K562 (cell line): ENCODE measurements at regions of chr9 and their contacts with region 1.

Region 1: GRCh38 chr9:12538842-12539579 is 154.2 kb upstream of the TYRP1 start:
- DNase-seq: no peak
- ATAC-seq: no peak
- H3K4me3 ChIP-seq: no peak overlapping the region
- H3K27ac ChIP-seq: no peak overlapping the region
- H3K4me1 ChIP-seq: no peaks in the 10 kb centered on the region
- H3K27me3 ChIP-seq: no peaks in the 10 kb centered on the region
- CTCF ChIP-seq: no peak
- EP300 ChIP-seq: no peak
- POLR2A ChIP-seq: no peak
- RAD21 ChIP-seq: no peak

Region 2: DNA sequence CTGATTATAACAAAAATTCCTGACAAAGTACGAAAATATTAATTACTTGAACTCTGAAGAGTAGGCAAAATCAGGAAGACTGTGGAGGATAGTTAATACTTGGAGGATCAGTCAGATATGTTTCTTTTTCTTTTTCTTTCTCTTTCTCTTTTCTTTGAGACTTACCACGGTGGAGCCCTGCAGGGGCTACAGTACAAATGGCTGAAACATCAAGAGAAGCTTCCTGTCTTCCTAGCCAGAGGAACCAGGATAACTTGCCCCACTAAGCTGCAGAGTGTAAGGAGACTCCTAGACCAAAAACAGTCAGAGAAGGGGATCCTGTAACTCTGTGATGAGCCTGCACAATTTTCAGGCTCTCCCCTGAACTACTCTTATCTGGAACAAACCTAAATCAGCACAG is 170.4 kb before region 1 on chr9:
- CTCF ChIA-PET with region 1: no interaction called
- POLR2A ChIA-PET with region 1: no interaction called
- in situ Hi-C with region 1: loop called (anchors 10 kb)
- intact Hi-C with region 1: no loop called
- DNase-seq: no peak
- ATAC-seq: no peak
- H3K4me3 ChIP-seq: no peak overlapping the region
- H3K27ac ChIP-seq: no peak overlapping the region
- H3K4me1 ChIP-seq: no peaks in the 10 kb centered on the region
- H3K27me3 ChIP-seq: no peaks in the 10 kb centered on the region
- CTCF ChIP-seq: no peak
- EP300 ChIP-seq: no peak
- POLR2A ChIP-seq: no peak
- RAD21 ChIP-seq: no peak